ENCODE measurements at regions of chr14 and their contacts with region 1.

Region 1: DNA sequence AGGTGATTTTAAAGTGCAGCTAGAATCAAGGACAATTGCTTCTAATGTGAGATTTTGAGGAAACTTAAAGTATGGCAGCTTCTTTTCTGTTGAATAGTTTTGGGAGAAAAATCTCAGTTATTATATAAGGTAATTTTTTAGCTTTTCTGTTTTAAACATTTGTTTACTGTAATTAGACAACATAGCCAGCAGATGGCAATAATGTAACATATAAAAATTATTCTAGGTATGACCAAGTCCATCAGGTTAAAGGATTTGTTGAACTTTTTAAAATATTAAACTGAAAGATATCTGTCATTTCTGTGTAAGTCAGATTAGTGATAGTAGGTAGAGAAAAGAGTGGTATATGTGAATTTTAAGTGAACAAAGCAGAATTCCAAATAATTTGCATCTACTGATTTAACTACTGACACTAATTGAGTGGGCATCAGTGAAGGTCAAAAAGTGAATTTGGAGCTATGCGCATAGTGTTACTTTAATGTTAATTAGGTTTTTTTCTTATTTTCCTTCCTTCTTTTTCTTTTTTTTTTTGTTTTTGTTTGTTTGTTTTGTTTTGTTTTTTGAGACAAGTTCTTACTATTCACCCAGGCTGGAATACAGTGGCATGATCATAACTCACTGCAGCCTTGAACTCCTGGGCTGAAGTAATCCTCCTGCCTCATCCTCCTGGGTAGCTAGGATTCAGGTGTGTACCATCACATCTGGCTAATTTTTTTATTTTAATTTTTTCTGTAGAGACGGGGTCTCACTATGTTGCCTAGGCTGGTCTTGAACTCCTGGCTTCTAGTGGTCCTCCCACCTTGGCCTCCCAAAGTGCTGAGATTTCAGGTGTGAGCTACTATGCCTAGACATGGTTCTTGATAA is 18.6 kb downstream of the PRORP start:
- DNase-seq: no peak

Region 2: GRCh38 chr14:35416108-35416750 is 275.3 kb after region 1 on chr14:
- intact Hi-C with region 1: loop called (anchors 5 kb)
- DNase-seq: peak in 3 of 42 donors; percentile 36 to 53 (median 37)